ENCODE measurements at regions of chr1 and their contacts with region 1.

Region 1: GRCh38 chr1:78045926-78046778 is at the start of gene GIPC2:
- DNase-seq: peak; percentile 59
- H3K4me3 ChIP-seq: peak within 1 kb of the TSS; percentile 63 to 74 (median 73)
- H3K27ac ChIP-seq: peak within 1 kb of the TSS; percentile 53
- H3K4me1 ChIP-seq: peaks cover 31% of the 10 kb centered on the region
- H3K27me3 ChIP-seq: no peaks in the 10 kb centered on the region
- CTCF ChIP-seq: no peak
- POLR2A ChIP-seq: no peak
- total RNA-seq, gene GIPC2: 7.7 and 9.6 TPM in 2 replicates

Region 2: GRCh38 chr1:77978969-77979876 is 66.9 kb before region 1 on chr1 and contains the start of gene FUBP1:
- CTCF ChIA-PET with region 1: interaction called, 5 read pairs
- POLR2A ChIA-PET with region 1: no interaction called
- dilution Hi-C with region 1: no loop called
- intact Hi-C with region 1: loop called (anchors 2 kb)
- DNase-seq: peak; percentile 99
- H3K4me3 ChIP-seq: peak within 1 kb of the TSS; percentile 43 to 100 (median 95)
- H3K27ac ChIP-seq: peak within 1 kb of the TSS; percentile 100
- H3K4me1 ChIP-seq: peaks cover 38% of the 10 kb centered on the region
- H3K27me3 ChIP-seq: no peaks in the 10 kb centered on the region
- CTCF ChIP-seq: peak; percentile 66 to 76
- POLR2A ChIP-seq: peak; percentile 98
- total RNA-seq, gene FUBP1: 163 and 166 TPM in 2 replicates

Region 3: DNA sequence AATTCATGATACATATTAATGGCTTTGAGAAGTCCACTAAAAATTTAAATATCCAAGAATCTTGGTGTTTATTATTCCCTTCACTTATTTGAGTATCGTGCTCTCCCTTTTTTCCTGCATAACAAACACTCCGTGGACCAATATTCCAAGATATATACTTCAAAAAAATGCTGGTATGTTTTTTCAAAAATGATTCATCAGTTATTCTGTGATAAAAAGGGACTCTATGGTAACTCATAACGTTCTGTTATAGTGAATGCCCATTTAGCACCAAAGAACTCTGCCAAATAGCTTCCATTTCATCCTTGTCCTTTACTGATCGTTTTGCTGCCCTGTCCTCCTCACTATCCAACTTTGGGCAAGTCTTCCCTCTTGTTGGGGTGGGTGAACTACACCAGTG is 12.5 kb after region 1 on chr1:
- CTCF ChIA-PET with region 1: no interaction called
- POLR2A ChIA-PET with region 1: no interaction called
- dilution Hi-C with region 1: no loop called
- intact Hi-C with region 1: no loop called
- DNase-seq: no peak
- H3K4me3 ChIP-seq: no peak overlapping the region
- H3K27ac ChIP-seq: no peak overlapping the region
- H3K4me1 ChIP-seq: peaks cover 16% of the 10 kb centered on the region
- H3K27me3 ChIP-seq: no peaks in the 10 kb centered on the region
- CTCF ChIP-seq: no peak
- POLR2A ChIP-seq: no peak

Region 4: DNA sequence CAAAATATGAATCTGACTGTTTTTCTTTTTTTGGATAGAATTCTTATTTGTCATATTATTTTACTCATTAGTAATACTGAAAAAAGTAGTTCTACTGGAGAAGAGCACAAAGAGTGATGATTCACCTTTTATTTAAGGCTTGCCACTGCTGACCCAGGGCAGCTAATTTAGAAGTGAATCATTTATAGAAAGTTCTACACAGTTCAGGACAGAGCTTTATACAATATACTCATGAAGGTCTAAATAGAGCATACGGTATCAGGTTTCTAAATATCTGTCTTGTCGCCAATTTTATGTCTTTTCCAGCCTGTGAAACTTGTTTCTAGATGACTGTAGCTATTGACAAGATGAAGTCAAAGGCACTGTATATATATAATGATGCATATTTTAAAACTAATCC is 24.6 kb after region 1 on chr1:
- CTCF ChIA-PET with region 1: interaction called, 5 read pairs
- POLR2A ChIA-PET with region 1: interaction called, 3 read pairs
- dilution Hi-C with region 1: no loop called
- intact Hi-C with region 1: loop called (anchors 1 kb)
- DNase-seq: peak; percentile 87
- H3K4me3 ChIP-seq: no peak overlapping the region
- H3K27ac ChIP-seq: peak overlapping the region; percentile 48
- H3K4me1 ChIP-seq: peaks cover 54% of the 10 kb centered on the region
- H3K27me3 ChIP-seq: no peaks in the 10 kb centered on the region
- CTCF ChIP-seq: no peak
- POLR2A ChIP-seq: no peak

Region 5: GRCh38 chr1:78095593-78095992 is 49.4 kb after region 1 on chr1:
- CTCF ChIA-PET with region 1: interaction called, 6 read pairs
- POLR2A ChIA-PET with region 1: interaction called, 6 read pairs
- dilution Hi-C with region 1: no loop called
- intact Hi-C with region 1: loop called (anchors 1 kb)
- DNase-seq: peak; percentile 86
- H3K4me3 ChIP-seq: no peak overlapping the region
- H3K27ac ChIP-seq: peak overlapping the region; percentile 91
- H3K4me1 ChIP-seq: peaks cover 46% of the 10 kb centered on the region
- H3K27me3 ChIP-seq: no peaks in the 10 kb centered on the region
- CTCF ChIP-seq: no peak
- POLR2A ChIP-seq: no peak

Region 6: DNA sequence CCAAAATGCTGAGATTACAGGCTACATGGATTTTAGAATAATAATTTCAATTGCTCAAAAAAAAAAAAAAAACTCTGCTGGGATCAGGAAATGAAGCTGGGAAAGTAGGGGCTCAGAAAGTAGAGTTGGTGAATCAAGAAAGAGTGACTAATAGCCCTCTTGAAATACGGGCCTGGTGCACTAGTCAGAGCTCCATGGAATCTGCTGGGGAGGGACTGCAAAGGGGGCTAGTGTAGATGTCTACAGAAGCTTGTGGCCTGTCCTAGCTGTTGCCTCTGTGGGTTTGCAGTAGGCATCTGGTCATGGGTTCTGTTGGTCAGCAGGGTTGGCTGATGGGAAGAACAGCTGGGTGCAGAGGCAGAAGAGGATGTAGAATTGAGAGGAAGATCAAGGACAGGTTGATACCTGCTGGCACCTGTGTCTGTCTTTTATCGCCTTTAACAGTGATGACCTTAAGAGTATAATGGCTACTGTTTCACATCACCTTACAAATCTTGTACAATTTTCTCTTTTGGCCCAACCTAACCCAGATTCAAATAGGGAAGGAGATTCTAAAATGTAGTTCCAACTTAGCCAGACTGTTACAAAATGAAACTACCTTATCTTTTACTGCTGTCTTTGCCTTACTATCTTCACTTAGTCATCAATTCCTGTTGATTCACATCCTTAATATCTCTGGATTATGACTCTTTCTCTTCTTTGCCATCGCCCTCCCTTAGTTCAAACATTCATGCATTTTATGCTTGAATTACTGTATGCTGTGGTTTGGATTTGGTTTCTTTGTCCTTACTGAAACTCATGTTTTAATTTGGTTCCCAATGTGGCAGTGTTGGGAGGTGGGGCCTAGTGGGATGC is 125.8 kb after region 1 on chr1:
- CTCF ChIA-PET with region 1: no interaction called
- POLR2A ChIA-PET with region 1: no interaction called
- dilution Hi-C with region 1: no loop called
- intact Hi-C with region 1: no loop called
- DNase-seq: peak; percentile 9
- H3K4me3 ChIP-seq: no peak overlapping the region
- H3K27ac ChIP-seq: no peak overlapping the region
- H3K4me1 ChIP-seq: peaks cover 9% of the 10 kb centered on the region
- H3K27me3 ChIP-seq: no peaks in the 10 kb centered on the region
- CTCF ChIP-seq: no peak
- POLR2A ChIP-seq: no peak